MCF 10A (cell line): ENCODE measurements at regions of chr4 and their contacts with region 1.

Region 1: GRCh38 chr4:7987148-7987989 is 47.7 kb upstream of the AFAP1 start:
- DNase-seq: peak; percentile 84
- H3K4me3 Mint-ChIP-seq: no peak overlapping the region
- H3K27ac Mint-ChIP-seq: no peak overlapping the region
- H3K4me1 Mint-ChIP-seq: peaks cover 6% of the 10 kb centered on the region
- H3K27me3 Mint-ChIP-seq: peaks cover 12% of the 10 kb centered on the region
- CTCF ChIP-seq: peak; percentile 90

Region 2: DNA sequence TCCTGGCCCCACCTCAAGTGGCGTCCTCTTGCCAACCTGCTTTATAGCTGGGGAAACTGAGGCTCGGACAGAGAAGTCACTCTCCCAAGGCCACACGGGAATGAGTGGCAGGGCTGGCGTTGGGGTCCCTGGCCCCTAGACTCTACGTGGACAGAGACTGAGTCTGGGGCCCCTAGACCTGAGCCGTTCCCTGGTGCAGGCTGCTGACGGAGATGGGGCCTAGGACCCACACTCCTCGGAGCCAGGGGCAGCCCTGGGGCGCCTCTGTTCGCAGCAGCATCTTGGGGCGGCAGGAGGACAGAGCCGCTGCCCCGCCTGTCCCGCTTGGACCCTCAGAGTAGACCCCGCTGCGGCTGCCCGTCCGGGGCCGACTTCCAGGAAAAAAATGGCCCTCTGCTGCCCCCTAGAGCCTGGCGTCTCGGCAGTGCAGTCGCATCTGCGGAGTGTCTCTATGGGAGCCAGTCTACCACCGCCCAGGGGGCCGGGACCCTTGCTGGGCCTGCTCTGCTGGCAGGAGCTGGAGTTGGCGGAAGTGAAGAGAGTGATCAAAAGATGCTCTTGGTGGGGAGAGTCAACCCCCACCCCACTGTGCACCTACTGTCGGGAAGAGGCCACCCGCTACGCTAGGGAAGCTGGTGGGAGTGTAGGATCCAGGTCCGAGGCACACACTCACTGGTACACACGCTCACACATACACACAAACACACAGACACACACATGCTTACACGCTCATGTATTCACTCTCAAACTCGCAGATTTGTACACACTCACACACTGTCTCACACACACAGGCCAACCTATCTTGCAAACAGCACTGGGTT is 267.8 kb before region 1 on chr4:
- CTCF ChIA-PET with region 1: no interaction called
- POLR2A ChIA-PET with region 1: no interaction called
- intact Hi-C with region 1: loop called (anchors 5 kb)
- DNase-seq: peak; percentile 38
- H3K4me3 Mint-ChIP-seq: no peak overlapping the region
- H3K27ac Mint-ChIP-seq: no peak overlapping the region
- H3K4me1 Mint-ChIP-seq: no peaks in the 10 kb centered on the region
- H3K27me3 Mint-ChIP-seq: peaks cover 24% of the 10 kb centered on the region
- CTCF ChIP-seq: peak; percentile 75

Region 3: GRCh38 chr4:7792616-7793015 is 194.8 kb before region 1 on chr4:
- CTCF ChIA-PET with region 1: interaction called, 14 read pairs
- POLR2A ChIA-PET with region 1: no interaction called
- intact Hi-C with region 1: no loop called
- DNase-seq: no peak
- H3K4me3 Mint-ChIP-seq: no peak overlapping the region
- H3K27ac Mint-ChIP-seq: no peak overlapping the region
- H3K4me1 Mint-ChIP-seq: no peaks in the 10 kb centered on the region
- H3K27me3 Mint-ChIP-seq: no peaks in the 10 kb centered on the region
- CTCF ChIP-seq: no peak

Region 4: DNA sequence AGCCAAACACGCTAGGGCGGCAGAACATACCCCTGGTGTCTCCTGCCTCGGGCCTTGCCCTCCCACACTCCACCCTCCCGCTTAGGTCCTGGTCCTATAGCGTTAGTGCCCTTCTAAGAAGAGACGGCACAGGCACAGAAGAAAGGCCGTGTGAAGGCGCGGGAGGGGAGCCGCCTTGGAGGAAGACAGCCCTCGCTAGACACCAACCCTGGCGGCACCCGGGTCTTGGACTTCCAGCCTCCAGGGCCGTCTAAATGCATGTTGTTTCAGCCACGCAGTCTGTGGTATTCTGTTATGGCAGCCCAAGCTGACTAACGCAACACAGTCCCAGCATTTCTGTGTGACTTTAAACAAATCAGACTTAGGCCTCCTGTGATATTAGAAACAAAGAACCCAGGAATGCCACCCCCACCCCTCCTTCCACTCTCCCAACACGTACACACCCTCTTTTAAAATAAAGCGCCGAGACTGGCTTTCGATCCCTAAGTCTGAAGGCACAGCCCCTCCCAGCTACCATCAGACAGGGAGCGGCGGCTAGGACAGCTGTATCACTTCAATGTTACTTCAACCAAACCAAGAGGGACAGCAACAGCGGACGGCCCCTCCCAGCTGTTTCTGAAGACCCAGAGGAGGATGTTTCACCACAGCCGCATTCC is 175.7 kb before region 1 on chr4:
- CTCF ChIA-PET with region 1: interaction called, 183 read pairs
- POLR2A ChIA-PET with region 1: interaction called, 3 read pairs
- intact Hi-C with region 1: loop called (anchors 1 kb)
- DNase-seq: no peak
- H3K4me3 Mint-ChIP-seq: no peak overlapping the region
- H3K27ac Mint-ChIP-seq: no peak overlapping the region
- H3K4me1 Mint-ChIP-seq: no peaks in the 10 kb centered on the region
- H3K27me3 Mint-ChIP-seq: no peaks in the 10 kb centered on the region
- CTCF ChIP-seq: no peak

Region 5: DNA sequence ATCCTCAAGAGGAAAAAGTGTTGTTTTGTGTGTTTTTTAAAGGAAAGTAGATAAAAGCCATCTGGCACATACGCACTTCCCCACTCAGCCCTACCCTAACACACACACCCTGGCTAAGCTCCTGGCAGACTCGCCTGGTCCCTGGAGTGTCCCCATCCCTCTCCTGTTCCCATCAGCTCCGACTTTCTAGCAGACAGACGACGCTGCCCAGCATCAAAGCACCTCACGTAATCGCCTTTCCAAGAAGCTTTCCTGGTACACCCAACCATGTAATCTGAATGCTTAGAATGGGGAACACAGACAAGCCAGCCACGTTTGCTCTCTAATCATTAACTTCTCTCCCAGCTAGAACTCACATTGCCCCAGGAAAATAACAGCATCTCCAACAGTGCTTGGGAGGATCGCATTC is 163.9 kb before region 1 on chr4:
- CTCF ChIA-PET with region 1: interaction called, 19 read pairs
- POLR2A ChIA-PET with region 1: no interaction called
- intact Hi-C with region 1: no loop called
- DNase-seq: no peak
- H3K4me3 Mint-ChIP-seq: no peak overlapping the region
- H3K27ac Mint-ChIP-seq: no peak overlapping the region
- H3K4me1 Mint-ChIP-seq: peaks cover 11% of the 10 kb centered on the region
- H3K27me3 Mint-ChIP-seq: no peaks in the 10 kb centered on the region
- CTCF ChIP-seq: no peak

Region 6: GRCh38 chr4:7929118-7929951 is 58.0 kb before region 1 on chr4:
- CTCF ChIA-PET with region 1: interaction called, 13 read pairs
- POLR2A ChIA-PET with region 1: no interaction called
- intact Hi-C with region 1: loop called (anchors 2 kb)
- DNase-seq: peak; percentile 84
- H3K4me3 Mint-ChIP-seq: no peak overlapping the region
- H3K27ac Mint-ChIP-seq: peak overlapping the region; percentile 39
- H3K4me1 Mint-ChIP-seq: peaks cover 29% of the 10 kb centered on the region
- H3K27me3 Mint-ChIP-seq: no peaks in the 10 kb centered on the region
- CTCF ChIP-seq: peak; percentile 43

Region 7: GRCh38 chr4:7939377-7940108 is 47.8 kb before region 1 on chr4 and contains the start of gene AFAP1:
- CTCF ChIA-PET with region 1: interaction called, 20 read pairs
- POLR2A ChIA-PET with region 1: no interaction called
- intact Hi-C with region 1: no loop called
- DNase-seq: peak; percentile 86
- H3K4me3 Mint-ChIP-seq: peak within 1 kb of the TSS; percentile 77
- H3K27ac Mint-ChIP-seq: no peak within 1 kb of the TSS
- H3K4me1 Mint-ChIP-seq: peaks cover 26% of the 10 kb centered on the region
- H3K27me3 Mint-ChIP-seq: no peaks in the 10 kb centered on the region
- CTCF ChIP-seq: no peak
- total RNA-seq, gene AFAP1: 22.5 and 29.4 TPM in 2 replicates